Pancreas (tissue), 10 donors: ENCODE measurements at regions of chr2 and their contacts with region 1.

Region 1: GRCh38 chr2:118689874-118690273 is 157.6 kb downstream of the EN1 start:
- DNase-seq: no peak
- ATAC-seq: no peak
- H3K4me3 ChIP-seq: no peak overlapping the region
- H3K27ac ChIP-seq: no peak overlapping the region
- H3K4me1 ChIP-seq: no peaks in the 10 kb centered on the region
- H3K27me3 ChIP-seq: no peaks in the 10 kb centered on the region
- CTCF ChIP-seq: no peak

Region 2: GRCh38 chr2:118709786-118710185 is 19.9 kb after region 1 on chr2:
- intact Hi-C with region 1: loop called in 1 of 3 experiments (anchors 2 kb)
- DNase-seq: no peak
- ATAC-seq: no peak
- H3K4me3 ChIP-seq: no peak overlapping the region
- H3K27ac ChIP-seq: no peak overlapping the region
- H3K4me1 ChIP-seq: no peaks in the 10 kb centered on the region
- H3K27me3 ChIP-seq: no peaks in the 10 kb centered on the region
- CTCF ChIP-seq: no peak

Region 3: DNA sequence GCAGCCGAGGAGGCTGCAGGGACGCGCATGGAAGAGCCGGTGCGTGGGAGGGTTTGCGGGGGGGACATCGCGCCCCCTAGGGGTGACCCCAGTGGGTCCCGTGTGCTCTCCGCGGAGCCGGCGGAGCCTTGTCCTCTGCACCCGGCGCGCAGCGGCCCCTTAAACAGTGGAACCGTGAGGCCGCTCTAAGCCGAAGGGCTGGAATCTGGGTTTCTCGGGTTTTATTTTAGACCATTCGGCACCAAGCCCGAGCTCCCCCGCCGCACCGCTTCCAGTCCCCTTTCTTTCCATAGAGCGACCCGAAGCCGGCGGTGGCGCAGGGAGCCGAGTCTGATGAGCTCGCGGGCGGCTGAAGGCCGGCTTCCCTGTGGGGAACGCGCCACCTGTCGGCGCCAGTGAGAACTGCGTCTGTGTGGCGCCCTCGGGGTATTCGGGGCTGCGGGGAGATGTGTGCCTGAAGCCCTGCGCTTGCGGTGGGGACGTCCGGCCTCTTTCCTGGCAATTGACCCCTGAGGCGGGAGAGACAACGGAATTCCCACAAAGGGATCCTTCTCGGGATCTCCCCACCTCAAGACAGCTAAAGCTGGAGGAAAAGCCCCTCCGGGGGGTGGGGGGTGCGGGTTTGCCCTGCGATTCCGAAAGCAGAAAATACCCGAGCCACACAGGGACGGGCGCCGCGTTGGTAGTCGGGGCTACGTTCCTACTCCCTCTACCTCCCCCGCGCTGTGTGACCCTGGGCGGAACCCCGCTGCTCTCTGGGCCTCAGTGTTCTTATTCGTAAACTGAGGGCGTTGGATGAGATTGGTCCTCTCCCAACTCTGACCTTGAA is 165.8 kb after region 1 on chr2:
- intact Hi-C with region 1: no loop called
- DNase-seq: peak; percentile 67 to 98 (median 85)
- ATAC-seq: peak; percentile 91 to 98 (median 96)
- H3K4me3 ChIP-seq: peak overlapping the region in 3 of 4 donors; percentile 4 to 30 (median 13)
- H3K27ac ChIP-seq: no peak overlapping the region
- H3K4me1 ChIP-seq: peaks cover 0 to 6% (median 0%) of the 10 kb centered on the region in 3 donors
- H3K27me3 ChIP-seq: peaks cover 3 to 72% (median 13%) of the 10 kb centered on the region in 4 donors
- CTCF ChIP-seq: peak; percentile 96 to 99 (median 98)